ENCODE measurements at regions of chr1 and their contacts with region 1.

Region 1: GRCh38 chr1:15026151-15026489 is 127.4 kb upstream of the TMEM51 start:
- DNase-seq: no peak
- H3K4me3 ChIP-seq: no peak overlapping the region
- H3K27ac ChIP-seq: peak overlapping the region; percentile 14
- H3K4me1 ChIP-seq: peaks cover 25% of the 10 kb centered on the region
- H3K27me3 ChIP-seq: no peaks in the 10 kb centered on the region
- CTCF ChIP-seq: no peak
- POLR2A ChIP-seq: no peak

Region 2: GRCh38 chr1:14924455-14925331 is 101.4 kb before region 1 on chr1:
- intact Hi-C with region 1: loop called (anchors 1 kb)
- DNase-seq: no peak
- H3K4me3 ChIP-seq: peak overlapping the region; percentile 63 to 97
- H3K27ac ChIP-seq: peak overlapping the region; percentile 89
- H3K4me1 ChIP-seq: peaks cover 57% of the 10 kb centered on the region
- H3K27me3 ChIP-seq: no peaks in the 10 kb centered on the region
- CTCF ChIP-seq: no peak
- POLR2A ChIP-seq: no peak

Region 3: DNA sequence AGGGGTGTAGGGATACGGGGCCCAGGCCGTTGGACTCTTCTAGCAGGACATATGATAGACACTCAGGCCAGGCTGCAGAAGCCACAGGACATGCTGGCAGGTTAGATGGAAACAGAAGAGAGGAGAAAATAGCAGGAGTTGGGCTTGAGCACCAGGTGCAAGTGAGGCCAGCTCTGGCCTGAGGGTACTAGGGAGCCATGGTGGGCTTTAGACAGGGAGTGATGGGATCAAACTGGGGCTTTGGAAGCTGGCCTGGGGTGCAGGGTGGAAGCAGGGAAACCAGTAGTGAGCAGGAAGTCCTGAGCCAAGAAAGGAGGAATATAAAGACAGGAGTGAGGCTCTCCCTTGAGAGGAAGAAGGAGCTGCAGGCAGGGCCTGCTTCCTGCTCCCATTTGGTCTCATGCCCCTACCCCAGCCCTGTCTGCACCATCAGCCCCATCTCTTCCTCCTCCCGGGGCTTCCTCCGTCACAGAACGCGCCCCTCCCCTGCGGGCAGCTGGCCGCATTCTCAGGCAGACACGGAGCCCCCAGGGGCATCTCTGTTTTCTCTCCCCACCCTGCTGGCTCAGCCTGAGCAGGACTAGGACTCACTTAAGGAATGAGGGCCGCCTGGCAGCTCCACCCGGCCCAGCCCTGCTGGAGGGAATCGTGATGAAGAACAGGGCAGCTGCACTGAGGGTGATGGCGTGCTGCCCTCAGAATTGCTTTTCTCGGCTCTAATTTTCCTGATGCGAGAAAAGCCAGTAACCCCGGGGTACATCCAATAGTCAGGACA is 38.1 kb before region 1 on chr1:
- intact Hi-C with region 1: no loop called
- DNase-seq: no peak
- H3K4me3 ChIP-seq: no peak overlapping the region
- H3K27ac ChIP-seq: peak overlapping the region; percentile 75
- H3K4me1 ChIP-seq: peaks cover 19% of the 10 kb centered on the region
- H3K27me3 ChIP-seq: no peaks in the 10 kb centered on the region
- CTCF ChIP-seq: no peak
- POLR2A ChIP-seq: no peak

Measured in vagina (tissue), 2 donors.